Right cardiac atrium (tissue), 5 donors: ENCODE measurements at regions of chr12 and their contacts with region 1.

Region 1: GRCh38 chr12:24596768-24597388 is 352.0 kb downstream of the BCAT1 start:
- DNase-seq: no peak
- ATAC-seq: no peak
- H3K4me3 ChIP-seq: no peak overlapping the region
- H3K27ac ChIP-seq: no peak overlapping the region
- H3K4me1 ChIP-seq: no peaks in the 10 kb centered on the region
- H3K27me3 ChIP-seq: no peaks in the 10 kb centered on the region

Region 2: GRCh38 chr12:24088751-24089509 is 507.9 kb before region 1 on chr12:
- intact Hi-C with region 1: no loop called
- DNase-seq: no peak
- ATAC-seq: no peak
- H3K4me3 ChIP-seq: no peak overlapping the region
- H3K27ac ChIP-seq: no peak overlapping the region
- H3K4me1 ChIP-seq: no peaks in the 10 kb centered on the region
- H3K27me3 ChIP-seq: no peaks in the 10 kb centered on the region

Region 3: GRCh38 chr12:24109381-24110039 is 487.4 kb before region 1 on chr12:
- intact Hi-C with region 1: loop called in 1 of 4 experiments (anchors 10 kb)
- DNase-seq: no peak
- ATAC-seq: no peak
- H3K4me3 ChIP-seq: no peak overlapping the region
- H3K27ac ChIP-seq: no peak overlapping the region
- H3K4me1 ChIP-seq: no peaks in the 10 kb centered on the region
- H3K27me3 ChIP-seq: no peaks in the 10 kb centered on the region

Region 4: DNA sequence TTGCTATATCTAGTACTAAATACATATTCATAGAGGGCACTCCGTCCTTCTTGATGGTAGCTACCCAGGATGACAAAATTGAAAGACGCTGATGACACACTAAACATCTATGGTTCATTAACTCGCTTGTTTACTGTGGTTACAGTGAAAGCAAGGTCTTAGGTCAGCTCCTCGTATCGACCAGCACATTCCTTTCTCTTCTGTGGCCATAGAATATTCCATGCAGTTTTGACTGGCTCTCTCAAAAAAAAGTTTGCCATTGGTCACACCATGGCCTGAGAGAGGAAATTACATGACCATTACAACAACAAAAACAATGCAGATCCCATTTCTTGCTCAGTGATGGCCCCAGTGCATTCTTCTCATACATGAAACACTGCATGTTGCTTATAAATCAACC is 236.0 kb before region 1 on chr12:
- intact Hi-C with region 1: loop called in 1 of 4 experiments (anchors 10 kb)
- DNase-seq: no peak
- ATAC-seq: no peak
- H3K4me3 ChIP-seq: no peak overlapping the region
- H3K27ac ChIP-seq: no peak overlapping the region
- H3K4me1 ChIP-seq: no peaks in the 10 kb centered on the region
- H3K27me3 ChIP-seq: no peaks in the 10 kb centered on the region